CD8-positive, alpha-beta T cell (primary cell): ENCODE measurements at regions of chr7 and their contacts with region 1.

Region 1: GRCh38 chr7:155729834-155730233 is 82.4 kb downstream of the SHH start:
- DNase-seq: no peak
- ATAC-seq: no peak
- H3K4me3 ChIP-seq: no peak overlapping the region
- H3K4me3 Mint-ChIP-seq: no peak overlapping the region
- H3K27ac ChIP-seq: no peak overlapping the region
- H3K27ac Mint-ChIP-seq: peak overlapping the region; percentile 2
- H3K4me1 ChIP-seq: peaks cover 18% of the 10 kb centered on the region
- H3K4me1 Mint-ChIP-seq: peaks cover 55% of the 10 kb centered on the region
- H3K27me3 ChIP-seq: no peaks in the 10 kb centered on the region
- H3K27me3 Mint-ChIP-seq: no peaks in the 10 kb centered on the region
- CTCF ChIP-seq: no peak

Region 2: DNA sequence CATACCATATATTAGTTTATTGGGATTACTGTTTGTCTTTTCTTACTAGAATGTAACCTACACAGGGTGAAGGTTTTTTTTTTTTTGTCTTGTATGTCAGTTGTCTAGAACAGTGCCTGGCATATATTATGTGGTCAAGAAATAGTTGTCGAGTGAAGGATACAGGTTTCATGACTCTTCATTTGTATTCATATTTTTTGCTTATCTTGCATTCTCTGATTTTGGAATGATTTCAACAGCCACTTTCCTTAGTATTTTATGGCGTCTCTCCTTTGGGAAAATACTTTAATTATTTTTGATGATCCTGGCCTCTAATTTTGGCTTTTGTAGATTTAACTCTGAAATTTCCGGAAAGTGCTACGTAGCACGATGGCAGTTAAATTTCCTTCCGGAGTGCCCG is 72.9 kb before region 1 on chr7:
- CTCF ChIA-PET with region 1: no interaction called
- POLR2A ChIA-PET with region 1: interaction called, 4 read pairs
- intact Hi-C with region 1: loop called in 1 of 2 experiments (anchors 5 kb)
- DNase-seq: no peak
- ATAC-seq: no peak
- H3K4me3 ChIP-seq: no peak overlapping the region
- H3K4me3 Mint-ChIP-seq: no peak overlapping the region
- H3K27ac ChIP-seq: no peak overlapping the region
- H3K27ac Mint-ChIP-seq: no peak overlapping the region
- H3K4me1 ChIP-seq: peaks cover 53% of the 10 kb centered on the region
- H3K4me1 Mint-ChIP-seq: peaks cover 80% of the 10 kb centered on the region
- H3K27me3 ChIP-seq: no peaks in the 10 kb centered on the region
- H3K27me3 Mint-ChIP-seq: no peaks in the 10 kb centered on the region
- CTCF ChIP-seq: no peak

Region 3: DNA sequence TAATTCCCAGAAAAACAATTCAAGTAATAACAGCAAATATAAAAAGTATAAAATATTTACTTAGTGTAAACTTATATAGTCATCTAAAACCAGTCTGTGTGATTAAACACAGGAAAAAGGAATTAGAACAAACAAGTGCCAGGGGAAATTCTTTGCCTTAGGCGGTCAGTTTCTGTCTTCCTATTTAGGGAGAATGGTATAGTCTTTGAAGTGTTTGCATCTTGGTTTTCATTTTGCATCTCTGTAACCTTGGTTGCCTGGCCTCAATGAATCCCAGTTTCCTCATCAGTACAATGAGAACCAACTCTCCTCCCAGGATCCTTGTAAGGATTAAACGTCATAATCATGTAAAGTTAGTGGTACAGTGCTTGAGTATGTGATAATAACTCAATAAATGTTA is 20.5 kb after region 1 on chr7:
- CTCF ChIA-PET with region 1: no interaction called
- POLR2A ChIA-PET with region 1: no interaction called
- intact Hi-C with region 1: loop called in 1 of 2 experiments (anchors 2 kb)
- DNase-seq: no peak
- ATAC-seq: no peak
- H3K4me3 ChIP-seq: no peak overlapping the region
- H3K4me3 Mint-ChIP-seq: no peak overlapping the region
- H3K27ac ChIP-seq: no peak overlapping the region
- H3K27ac Mint-ChIP-seq: no peak overlapping the region
- H3K4me1 ChIP-seq: peaks cover 32% of the 10 kb centered on the region
- H3K4me1 Mint-ChIP-seq: peaks cover 88% of the 10 kb centered on the region
- H3K27me3 ChIP-seq: no peaks in the 10 kb centered on the region
- H3K27me3 Mint-ChIP-seq: no peaks in the 10 kb centered on the region
- CTCF ChIP-seq: no peak